Left lung (tissue), 14 donors: ENCODE measurements at regions of chrX and their contacts with region 1.

Region 1: DNA sequence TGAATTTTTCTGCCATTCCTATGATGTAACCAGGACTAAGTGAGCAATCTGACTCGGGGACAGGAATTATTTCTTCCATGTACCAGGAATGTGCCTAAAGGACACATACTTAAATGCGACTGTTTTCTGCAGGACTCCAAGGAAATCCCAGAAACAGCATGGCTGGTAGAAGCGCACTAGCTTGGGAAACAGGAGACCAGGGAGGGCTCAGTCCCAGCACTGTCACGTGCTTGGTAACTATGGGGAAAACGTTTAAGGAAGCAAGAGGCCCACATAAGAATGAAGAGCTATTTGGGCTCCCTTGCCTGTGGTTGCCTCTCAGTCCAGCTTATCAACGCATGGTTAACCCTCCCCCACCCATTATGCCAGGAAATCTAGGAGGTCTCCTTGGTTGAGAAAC is 19.6 kb downstream of the MPP1 start:
- DNase-seq: no peak
- ATAC-seq: no peak
- H3K4me3 ChIP-seq: no peak overlapping the region
- H3K27ac ChIP-seq: no peak overlapping the region
- H3K4me1 ChIP-seq: peaks cover 0 to 9% of the 10 kb centered on the region in 2 donors
- H3K27me3 ChIP-seq: no peaks in the 10 kb centered on the region
- CTCF ChIP-seq: no peak

Region 2: GRCh38 chrX:154836163-154836562 is 50.4 kb after region 1 on chrX:
- intact Hi-C with region 1: loop called in 1 of 2 experiments (anchors 5 kb)
- DNase-seq: no peak
- ATAC-seq: no peak
- H3K4me3 ChIP-seq: no peak overlapping the region
- H3K27ac ChIP-seq: no peak overlapping the region
- H3K4me1 ChIP-seq: no peaks in the 10 kb centered on the region
- H3K27me3 ChIP-seq: no peaks in the 10 kb centered on the region
- CTCF ChIP-seq: no peak